Activated naive CD8-positive, alpha-beta T cell treated with anti-CD3 and anti-CD28 coated beads, Interleukin-2, amount 10 ng/mL, durations not matched to agents 7 days and 5 days (primary cell): ENCODE measurements at regions of chr15 and their contacts with region 1.

Region 1: GRCh38 chr15:49155110-49155833 is at the start of gene COPS2:
- DNase-seq: peak; percentile 81
- ATAC-seq: peak; percentile 94
- H3K4me3 Mint-ChIP-seq: peak within 1 kb of the TSS; percentile 89
- H3K27ac Mint-ChIP-seq: peak within 1 kb of the TSS; percentile 93
- H3K4me1 Mint-ChIP-seq: peaks cover 32% of the 10 kb centered on the region
- H3K27me3 Mint-ChIP-seq: no peaks in the 10 kb centered on the region
- total RNA-seq, gene COPS2: 58.9 to 61.1 TPM

Region 2: GRCh38 chr15:48810414-48811317 is 344.6 kb before region 1 on chr15 and contains the start of gene CEP152:
- POLR2A ChIA-PET with region 1: interaction called, 11 read pairs
- DNase-seq: peak; percentile 93
- ATAC-seq: peak; percentile 96
- H3K4me3 Mint-ChIP-seq: peak within 1 kb of the TSS; percentile 90
- H3K27ac Mint-ChIP-seq: peak within 1 kb of the TSS; percentile 96
- H3K4me1 Mint-ChIP-seq: peaks cover 37% of the 10 kb centered on the region
- H3K27me3 Mint-ChIP-seq: peaks cover 9% of the 10 kb centered on the region
- total RNA-seq, gene CEP152: 31.1 to 39.2 TPM

Region 3: GRCh38 chr15:49096090-49096750 is 59.1 kb before region 1 on chr15:
- POLR2A ChIA-PET with region 1: no interaction called
- DNase-seq: no peak
- ATAC-seq: no peak
- H3K4me3 Mint-ChIP-seq: no peak overlapping the region
- H3K27ac Mint-ChIP-seq: no peak overlapping the region
- H3K4me1 Mint-ChIP-seq: no peaks in the 10 kb centered on the region
- H3K27me3 Mint-ChIP-seq: no peaks in the 10 kb centered on the region

Region 4: GRCh38 chr15:49169880-49170597 is 14.8 kb after region 1 on chr15 and contains the start of gene GALK2:
- POLR2A ChIA-PET with region 1: interaction called, 21 read pairs
- DNase-seq: peak; percentile 72
- ATAC-seq: peak; percentile 99
- H3K4me3 Mint-ChIP-seq: peak within 1 kb of the TSS; percentile 90
- H3K27ac Mint-ChIP-seq: peak within 1 kb of the TSS; percentile 92
- H3K4me1 Mint-ChIP-seq: peaks cover 23% of the 10 kb centered on the region
- H3K27me3 Mint-ChIP-seq: no peaks in the 10 kb centered on the region
- total RNA-seq, gene GALK2: 27.2 to 30.6 TPM